ENCODE measurements at regions of chr2 and their contacts with region 1.

Region 1: GRCh38 chr2:219229305-219230058 is at the starts of genes ANKZF1 and ATG9A:
- DNase-seq: peak; percentile 100
- ATAC-seq: peak; percentile 98
- H3K4me3 Mint-ChIP-seq: peak within 1 kb of the TSS; percentile 98
- H3K27ac Mint-ChIP-seq: peak within 1 kb of the TSS; percentile 95
- H3K4me1 Mint-ChIP-seq: peaks cover 65% of the 10 kb centered on the region
- H3K27me3 Mint-ChIP-seq: no peaks in the 10 kb centered on the region
- total RNA-seq, gene ANKZF1: 89.4 to 105 TPM
- total RNA-seq, gene ATG9A: 56.6 to 60.7 TPM

Region 2: DNA sequence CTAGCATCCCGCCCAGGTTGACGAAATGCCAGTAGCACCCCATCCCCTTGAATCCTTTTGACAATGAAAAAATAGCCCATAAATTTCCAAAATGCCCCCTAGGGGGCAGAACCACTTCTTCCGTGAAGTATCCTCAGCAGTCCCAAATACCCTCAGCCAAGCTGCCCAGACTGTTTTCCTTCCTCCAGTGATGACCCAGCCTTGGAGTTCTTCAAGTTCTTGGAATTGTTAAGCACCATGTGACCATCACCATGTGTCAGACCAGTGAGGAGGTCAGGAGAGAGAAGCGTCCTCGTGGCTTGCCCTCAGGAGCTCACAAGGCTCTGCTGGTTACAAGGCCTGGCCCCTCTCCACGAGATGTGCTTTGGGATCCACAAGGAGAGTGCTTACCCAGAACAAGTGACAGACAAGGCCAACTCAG is 58.2 kb before region 1 on chr2:
- CTCF ChIA-PET with region 1: interaction called, 10 read pairs
- DNase-seq: no peak
- ATAC-seq: peak; percentile 45
- H3K4me3 Mint-ChIP-seq: no peak overlapping the region
- H3K27ac Mint-ChIP-seq: no peak overlapping the region
- H3K4me1 Mint-ChIP-seq: peaks cover 36% of the 10 kb centered on the region
- H3K27me3 Mint-ChIP-seq: no peaks in the 10 kb centered on the region

Region 3: DNA sequence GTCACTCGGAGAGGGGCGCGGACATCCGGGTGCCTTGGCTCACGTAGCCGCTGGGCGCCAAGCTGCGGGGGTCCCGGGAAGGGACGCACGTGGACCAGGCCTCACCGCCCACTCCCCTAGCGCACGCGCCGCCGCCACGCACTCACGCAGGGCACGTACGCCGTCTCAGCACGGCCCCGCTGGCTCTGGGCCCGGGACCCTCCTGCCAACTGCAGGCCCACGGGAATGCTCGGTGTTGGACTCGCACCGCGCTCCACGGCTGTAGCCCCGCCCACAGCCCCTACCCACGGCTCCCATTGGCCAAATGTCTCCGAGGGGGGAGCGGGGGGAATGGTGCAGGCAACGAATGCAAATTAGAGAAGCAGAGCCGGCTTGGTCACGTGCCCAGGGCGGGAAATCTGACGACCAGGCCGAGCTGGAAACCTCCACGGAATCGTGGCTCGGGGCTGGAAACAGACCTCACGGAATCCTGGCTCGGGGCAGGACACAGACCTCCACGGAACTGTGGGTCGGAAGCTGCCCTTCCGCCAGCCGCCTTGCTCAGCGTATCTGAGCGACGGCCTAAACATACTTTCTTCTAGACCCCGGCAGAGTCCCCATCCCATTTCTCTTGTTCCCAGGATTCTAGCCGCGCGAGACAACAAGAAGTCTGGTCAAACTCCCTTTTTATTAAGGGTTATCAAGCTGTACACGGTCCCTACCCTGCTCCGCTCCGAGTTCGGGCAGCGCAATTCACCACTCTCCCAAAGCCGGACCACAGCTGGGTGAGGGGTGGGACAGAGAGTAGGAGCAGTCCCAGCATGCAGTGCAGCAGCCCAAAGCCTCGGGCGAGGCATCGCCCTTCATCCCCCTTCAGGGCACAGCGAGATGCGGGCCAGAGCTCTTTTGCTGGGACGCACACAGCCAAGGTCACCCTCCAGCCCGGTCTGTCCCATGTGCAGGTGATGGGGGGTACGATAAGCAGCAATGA is 10.5 kb before region 1 on chr2 and contains the start of gene ABCB6:
- CTCF ChIA-PET with region 1: interaction called, 24 read pairs
- DNase-seq: peak; percentile 89
- ATAC-seq: peak; percentile 78
- H3K4me3 Mint-ChIP-seq: peak within 1 kb of the TSS; percentile 76
- H3K27ac Mint-ChIP-seq: peak within 1 kb of the TSS; percentile 72
- H3K4me1 Mint-ChIP-seq: peaks cover 25% of the 10 kb centered on the region
- H3K27me3 Mint-ChIP-seq: no peaks in the 10 kb centered on the region
- total RNA-seq, gene ABCB6: 12.6 to 15.2 TPM

Region 4: GRCh38 chr2:219245148-219245898 is 15.8 kb after region 1 on chr2 and contains the starts of genes GLB1L and STK16:
- CTCF ChIA-PET with region 1: interaction called, 19 read pairs
- DNase-seq: peak; percentile 94
- ATAC-seq: peak; percentile 75
- H3K4me3 Mint-ChIP-seq: peak within 1 kb of the TSS; percentile 99
- H3K27ac Mint-ChIP-seq: peak within 1 kb of the TSS; percentile 100
- H3K4me1 Mint-ChIP-seq: peaks cover 61% of the 10 kb centered on the region
- H3K27me3 Mint-ChIP-seq: no peaks in the 10 kb centered on the region
- total RNA-seq, gene GLB1L: 4.3 to 4.9 TPM
- total RNA-seq, gene STK16: 37.3 to 41.7 TPM

Measured in activated CD8-positive, alpha-beta memory T cell treated with anti-CD3 and anti-CD28 coated beads, Interleukin-2, amount 10 ng/mL, durations not matched to agents 7 days and 5 days (primary cell).